Mammary epithelial cell (primary cell): ENCODE measurements at regions of chr13 and their contacts with region 1.

Region 1: DNA sequence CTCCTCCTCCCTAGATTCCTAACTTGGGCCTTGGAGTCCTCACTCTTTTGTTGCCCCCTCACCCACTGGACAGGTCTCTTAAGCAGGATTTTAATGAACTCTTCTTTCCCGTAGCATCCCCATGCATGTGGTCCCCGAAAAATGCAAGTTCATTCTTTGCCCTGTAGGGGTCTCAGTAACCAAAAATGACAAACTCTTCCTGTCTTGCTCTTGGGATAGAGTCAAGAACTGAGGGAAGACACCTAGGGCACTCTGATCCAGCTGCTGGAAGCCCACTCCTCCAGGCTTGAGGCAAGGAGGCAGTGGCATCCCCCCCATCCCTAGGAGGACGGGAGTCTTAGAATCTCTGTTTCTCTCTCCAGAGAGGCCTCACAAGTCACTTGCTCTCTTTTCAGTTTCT is 987.0 kb downstream of the DIAPH3 start:
- DNase-seq: no peak
- H3K4me3 ChIP-seq: no peak overlapping the region
- H3K27ac ChIP-seq: no peak overlapping the region
- H3K4me1 ChIP-seq: no peaks in the 10 kb centered on the region
- H3K27me3 ChIP-seq: no peaks in the 10 kb centered on the region
- CTCF ChIP-seq: peak in 1 of 2 donors; percentile 20

Region 2: GRCh38 chr13:57925250-57925649 is 1251.5 kb before region 1 on chr13:
- CTCF ChIA-PET with region 1: no interaction called
- dilution Hi-C with region 1: no loop called
- in situ Hi-C with region 1: no loop called
- intact Hi-C with region 1: loop called (anchors 5 kb)
- DNase-seq: no peak
- H3K4me3 ChIP-seq: no peak overlapping the region
- H3K27ac ChIP-seq: no peak overlapping the region
- H3K4me1 ChIP-seq: no peaks in the 10 kb centered on the region
- H3K27me3 ChIP-seq: no peaks in the 10 kb centered on the region
- CTCF ChIP-seq: peak in 1 of 2 donors; percentile 19

Region 3: GRCh38 chr13:58907347-58907746 is 269.4 kb before region 1 on chr13:
- CTCF ChIA-PET with region 1: no interaction called
- dilution Hi-C with region 1: no loop called
- in situ Hi-C with region 1: no loop called
- intact Hi-C with region 1: loop called (anchors 10 kb)
- DNase-seq: no peak
- H3K4me3 ChIP-seq: no peak overlapping the region
- H3K27ac ChIP-seq: no peak overlapping the region
- H3K4me1 ChIP-seq: no peaks in the 10 kb centered on the region
- H3K27me3 ChIP-seq: no peaks in the 10 kb centered on the region
- CTCF ChIP-seq: no peak

Region 4: GRCh38 chr13:59103004-59103768 is 73.6 kb before region 1 on chr13:
- CTCF ChIA-PET with region 1: no interaction called
- dilution Hi-C with region 1: no loop called
- in situ Hi-C with region 1: no loop called
- intact Hi-C with region 1: no loop called
- DNase-seq: no peak
- H3K4me3 ChIP-seq: no peak overlapping the region
- H3K27ac ChIP-seq: no peak overlapping the region
- H3K4me1 ChIP-seq: no peaks in the 10 kb centered on the region
- H3K27me3 ChIP-seq: no peaks in the 10 kb centered on the region
- CTCF ChIP-seq: no peak

Region 5: GRCh38 chr13:59230484-59231264 is 53.9 kb after region 1 on chr13:
- CTCF ChIA-PET with region 1: no interaction called
- dilution Hi-C with region 1: no loop called
- in situ Hi-C with region 1: no loop called
- intact Hi-C with region 1: no loop called
- DNase-seq: no peak
- H3K4me3 ChIP-seq: no peak overlapping the region
- H3K27ac ChIP-seq: no peak overlapping the region
- H3K4me1 ChIP-seq: no peaks in the 10 kb centered on the region
- H3K27me3 ChIP-seq: no peaks in the 10 kb centered on the region
- CTCF ChIP-seq: no peak